ENCODE measurements at regions of chr19 and their contacts with region 1.

Region 1: DNA sequence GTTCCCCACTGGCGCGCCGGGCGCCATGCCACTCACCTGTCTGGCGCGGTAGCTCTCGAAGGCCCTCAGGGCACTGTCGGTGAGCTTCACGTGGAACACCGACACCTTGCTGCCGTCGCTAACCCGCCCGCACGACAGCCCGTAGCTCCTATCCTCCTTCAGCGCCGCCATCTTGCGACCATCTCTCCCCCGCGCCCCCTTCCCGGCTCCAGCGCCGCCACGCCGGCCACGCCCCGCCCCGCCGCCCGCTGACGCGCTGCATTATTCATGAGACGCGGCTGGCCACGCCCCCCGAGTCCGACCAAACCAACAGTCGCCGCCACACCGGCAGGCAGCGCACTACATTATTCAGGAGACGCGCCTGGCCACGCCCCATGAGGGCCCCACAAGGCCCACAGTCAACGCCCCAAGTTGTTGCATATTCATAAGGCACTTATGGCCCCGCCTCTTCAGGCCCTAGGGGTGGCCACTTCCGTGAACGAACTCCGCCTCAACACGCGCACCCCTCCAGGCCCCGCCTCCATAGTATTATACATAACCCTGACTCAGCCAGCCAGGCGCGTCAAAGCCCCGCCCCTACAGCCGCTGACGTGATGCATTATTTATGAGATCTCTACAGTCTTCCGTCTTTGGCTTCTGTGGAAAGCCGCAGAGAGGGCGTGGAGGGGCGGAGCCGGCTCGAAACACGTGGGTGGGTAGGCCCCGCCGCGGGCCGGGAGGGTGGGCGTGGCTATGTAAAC is at the start of gene ELL:
- DNase-seq: peak; percentile 100
- H3K4me3 ChIP-seq: peak within 1 kb of the TSS; percentile 94
- H3K27ac ChIP-seq: peak within 1 kb of the TSS; percentile 94
- H3K4me1 ChIP-seq: peaks cover 43% of the 10 kb centered on the region
- H3K27me3 ChIP-seq: no peaks in the 10 kb centered on the region
- CTCF ChIP-seq: no peak
- total RNA-seq, gene ELL: 7.9 TPM

Region 2: DNA sequence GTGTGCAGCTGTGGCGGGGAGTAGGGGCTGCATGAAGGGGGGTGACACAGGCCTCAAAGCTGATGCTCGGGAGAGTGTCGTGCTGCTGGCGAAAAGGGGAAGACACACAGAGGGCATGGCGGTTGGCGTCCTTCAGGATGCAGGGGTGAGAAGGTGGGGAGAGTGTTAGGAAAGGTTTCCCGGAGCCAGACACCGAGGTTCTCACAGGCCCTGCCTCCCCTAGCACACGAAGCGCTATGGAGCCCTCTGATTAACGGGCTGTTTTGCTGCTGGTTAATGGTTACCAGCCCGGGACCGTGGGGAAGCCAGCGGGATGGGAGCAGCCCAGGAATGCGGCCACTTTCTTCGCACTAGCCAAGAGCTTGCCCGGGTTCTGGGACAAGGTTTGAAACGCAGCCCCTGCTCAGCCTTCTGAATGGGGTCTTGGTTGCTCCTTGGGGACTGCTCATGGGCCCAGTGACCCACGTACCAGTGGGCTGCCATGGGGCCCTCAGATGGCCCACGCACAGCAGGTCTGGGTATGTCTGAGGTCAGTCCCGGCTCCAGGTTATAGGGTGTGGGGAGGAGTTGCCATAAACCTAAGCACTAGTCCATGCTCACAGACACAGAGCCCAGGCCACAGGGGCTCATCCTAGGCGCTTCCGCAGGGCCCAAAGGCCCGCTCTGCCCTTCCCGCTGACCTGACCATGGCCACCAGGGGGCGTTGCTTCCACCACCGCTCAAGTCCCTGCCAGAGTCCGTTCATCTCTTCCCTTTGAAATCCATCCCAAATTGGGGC is 52.8 kb before region 1 on chr19:
- intact Hi-C with region 1: loop called (anchors 5 kb)
- DNase-seq: peak; percentile 69
- H3K4me3 ChIP-seq: no peak overlapping the region
- H3K27ac ChIP-seq: peak overlapping the region; percentile 14
- H3K4me1 ChIP-seq: peaks cover 76% of the 10 kb centered on the region
- H3K27me3 ChIP-seq: no peaks in the 10 kb centered on the region
- CTCF ChIP-seq: peak; percentile 78